ENCODE measurements at regions of chr11 and their contacts with region 1.

Region 1: DNA sequence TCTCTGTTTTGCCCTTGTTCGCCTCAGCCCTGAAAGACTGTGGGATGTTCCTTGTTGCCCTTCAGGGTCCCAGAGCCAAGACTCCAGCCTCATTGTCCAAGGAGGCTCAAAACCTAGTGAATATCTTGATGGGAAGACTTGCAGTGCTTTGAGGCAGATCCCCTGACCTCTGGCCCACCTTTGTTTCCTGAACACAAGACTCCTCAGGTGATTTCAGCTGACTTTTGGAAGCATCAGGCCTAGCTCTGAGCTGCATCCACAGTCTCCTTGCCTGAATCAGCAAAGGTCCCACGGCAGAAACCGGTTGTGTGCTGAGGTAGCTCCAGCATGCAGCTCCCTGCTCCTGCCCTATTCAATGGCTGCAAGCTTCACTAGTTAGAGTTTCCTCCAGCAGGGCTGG is 159.3 kb upstream of the B3GAT1 start:
- DNase-seq: peak in 1 of 2 experiments; percentile 12
- H3K4me3 ChIP-seq: no peak overlapping the region
- H3K27ac ChIP-seq: no peak overlapping the region
- H3K4me1 ChIP-seq: no peaks in the 10 kb centered on the region
- H3K27me3 ChIP-seq: peaks cover 56% of the 10 kb centered on the region
- CTCF ChIP-seq: no peak

Region 2: DNA sequence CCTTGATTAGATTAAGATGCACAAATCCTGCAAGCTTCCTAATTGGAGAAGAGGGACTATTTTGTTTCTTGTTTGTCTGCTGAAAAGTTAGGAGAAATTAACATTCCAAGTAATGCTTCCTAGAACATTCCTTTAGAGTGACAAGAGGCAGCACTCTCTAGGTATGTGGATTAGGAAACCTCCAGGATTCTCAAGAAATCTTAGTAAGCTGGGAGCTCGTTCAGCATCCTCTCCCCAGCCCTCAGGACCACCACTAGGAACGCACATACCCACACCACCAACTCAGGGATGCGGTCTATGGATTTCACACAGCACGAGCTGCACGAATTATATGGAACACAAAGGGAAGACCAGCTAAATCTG is 400.4 kb before region 1 on chr11:
- CTCF ChIA-PET with region 1: no interaction called
- POLR2A ChIA-PET with region 1: interaction called, 11 read pairs
- intact Hi-C with region 1: no loop called
- DNase-seq: no peak
- H3K4me3 ChIP-seq: no peak overlapping the region
- H3K27ac ChIP-seq: no peak overlapping the region
- H3K4me1 ChIP-seq: no peaks in the 10 kb centered on the region
- H3K27me3 ChIP-seq: no peaks in the 10 kb centered on the region
- CTCF ChIP-seq: no peak